Activated T-helper 2 cell treated with anti-CD3 and anti-CD28 coated beads, Interferon-gamma antibody, Interleukin-2, Interleukin-4, amounts not matched to agents 10 μg/mL and 5 μg/mL and 100 μg/mL, durations not matched to agents 14 hours and 24 hours and 36 hours (primary cell): ENCODE measurements at regions of chr4 and their contacts with region 1.

Region 1: GRCh38 chr4:26141911-26142638 is 178.7 kb upstream of the RBPJ start:
- DNase-seq: no peak
- H3K4me3 Mint-ChIP-seq: peak overlapping the region; percentile 22
- H3K27ac Mint-ChIP-seq: peak overlapping the region; percentile 89
- H3K4me1 Mint-ChIP-seq: peaks cover 73% of the 10 kb centered on the region
- H3K27me3 Mint-ChIP-seq: no peaks in the 10 kb centered on the region

Region 2: DNA sequence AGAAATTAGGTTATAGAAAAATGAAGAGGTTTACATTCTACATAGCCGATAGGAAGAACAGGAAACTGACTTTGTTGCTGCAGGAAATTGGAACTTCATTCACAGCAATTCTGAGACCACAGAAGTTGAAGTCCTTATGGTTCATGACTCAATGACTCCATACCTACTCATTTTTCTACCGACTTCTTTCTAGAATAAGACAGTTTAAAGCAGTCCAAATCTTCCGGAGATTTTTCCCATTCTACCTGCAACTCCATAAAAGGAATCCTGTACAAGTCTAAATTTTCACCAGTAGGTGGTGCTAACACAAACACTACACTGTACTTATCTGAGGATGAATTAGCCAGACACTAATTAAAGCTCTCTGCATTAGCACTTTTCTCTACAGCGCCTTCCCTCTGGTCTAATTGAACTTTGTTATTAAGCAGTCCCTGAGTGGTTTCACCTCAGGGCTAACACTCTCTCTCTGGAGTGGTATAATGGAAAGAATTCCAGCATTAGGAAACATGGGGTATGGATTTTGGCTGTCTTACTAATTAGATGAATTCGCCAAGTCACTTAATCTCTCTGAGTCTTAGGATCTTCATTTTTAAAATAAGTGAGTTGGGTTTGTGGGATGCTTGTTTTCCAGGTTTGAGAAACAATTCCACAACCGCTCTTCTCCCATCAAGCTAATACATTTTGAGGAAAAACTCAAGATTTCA is 60.1 kb before region 1 on chr4:
- intact Hi-C with region 1: loop called (anchors 1 kb)
- DNase-seq: no peak
- H3K4me3 Mint-ChIP-seq: no peak overlapping the region
- H3K27ac Mint-ChIP-seq: peak overlapping the region; percentile 93
- H3K4me1 Mint-ChIP-seq: peaks cover 79% of the 10 kb centered on the region
- H3K27me3 Mint-ChIP-seq: no peaks in the 10 kb centered on the region

Region 3: GRCh38 chr4:26088433-26088928 is 53.6 kb before region 1 on chr4:
- intact Hi-C with region 1: loop called (anchors 1 kb)
- DNase-seq: no peak
- H3K4me3 Mint-ChIP-seq: peak overlapping the region; percentile 55
- H3K27ac Mint-ChIP-seq: peak overlapping the region; percentile 94
- H3K4me1 Mint-ChIP-seq: peaks cover 70% of the 10 kb centered on the region
- H3K27me3 Mint-ChIP-seq: no peaks in the 10 kb centered on the region

Region 4: DNA sequence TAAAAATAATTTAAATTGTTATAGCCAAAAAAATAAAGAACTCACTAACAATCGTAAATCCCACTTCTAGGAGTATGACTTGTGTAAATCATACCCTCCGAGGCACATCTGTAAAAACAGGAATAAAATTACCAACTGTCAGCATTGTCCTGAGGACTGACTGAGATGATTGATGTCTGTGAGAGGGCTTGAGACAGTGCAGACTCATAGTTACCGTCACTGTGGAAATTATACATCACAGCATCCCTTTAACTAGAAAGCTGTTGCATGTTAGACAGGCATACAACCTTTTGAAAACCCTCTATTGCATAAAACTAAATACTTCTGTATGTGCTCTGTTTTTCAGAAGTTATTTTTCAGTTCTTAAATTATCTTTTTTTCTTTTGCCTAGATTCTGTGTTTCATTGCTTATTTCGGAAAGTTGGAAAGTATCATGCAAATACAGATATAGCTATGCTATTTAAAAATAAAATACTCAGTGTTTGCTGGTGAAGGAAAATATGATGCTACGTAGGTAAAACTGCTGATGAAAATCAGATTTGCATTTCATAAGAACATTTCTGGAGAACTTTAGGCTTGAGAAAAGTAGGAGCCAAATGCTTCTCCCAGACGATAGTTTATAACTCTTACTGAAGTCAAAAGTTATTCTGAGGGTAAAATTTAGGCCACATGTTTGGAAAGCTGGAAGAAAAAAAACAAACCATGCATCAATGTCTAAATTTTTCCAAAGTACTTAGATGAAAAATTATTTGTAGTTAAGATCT is 165.1 kb after region 1 on chr4:
- intact Hi-C with region 1: loop called (anchors 1 kb)
- DNase-seq: no peak
- H3K4me3 Mint-ChIP-seq: peak overlapping the region; percentile 2
- H3K27ac Mint-ChIP-seq: peak overlapping the region; percentile 91
- H3K4me1 Mint-ChIP-seq: peaks cover 43% of the 10 kb centered on the region
- H3K27me3 Mint-ChIP-seq: no peaks in the 10 kb centered on the region

Region 5: DNA sequence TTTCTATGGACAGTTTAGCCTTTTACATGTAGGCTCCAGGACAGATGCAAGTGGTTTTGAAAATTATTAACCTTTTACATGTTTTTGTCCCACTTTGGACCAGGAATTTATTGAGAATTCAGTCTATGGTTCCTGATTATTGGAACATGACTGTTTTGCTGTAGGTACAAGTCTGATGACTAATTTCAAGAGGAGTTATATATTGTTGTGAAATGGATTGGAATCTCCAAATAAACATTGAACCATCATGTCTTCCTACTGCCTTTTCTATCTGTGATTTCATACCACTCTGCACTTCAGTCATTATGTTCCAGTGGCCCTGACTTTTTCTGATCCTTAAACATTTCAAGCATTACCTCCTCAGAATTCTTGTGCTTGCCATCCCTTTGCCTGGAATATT is 477.7 kb after region 1 on chr4:
- intact Hi-C with region 1: no loop called
- DNase-seq: no peak
- H3K4me3 Mint-ChIP-seq: no peak overlapping the region
- H3K27ac Mint-ChIP-seq: no peak overlapping the region
- H3K4me1 Mint-ChIP-seq: no peaks in the 10 kb centered on the region
- H3K27me3 Mint-ChIP-seq: no peaks in the 10 kb centered on the region